AG04449 (cell line): ENCODE measurements at regions of chr11 and their contacts with region 1.

Region 1: DNA sequence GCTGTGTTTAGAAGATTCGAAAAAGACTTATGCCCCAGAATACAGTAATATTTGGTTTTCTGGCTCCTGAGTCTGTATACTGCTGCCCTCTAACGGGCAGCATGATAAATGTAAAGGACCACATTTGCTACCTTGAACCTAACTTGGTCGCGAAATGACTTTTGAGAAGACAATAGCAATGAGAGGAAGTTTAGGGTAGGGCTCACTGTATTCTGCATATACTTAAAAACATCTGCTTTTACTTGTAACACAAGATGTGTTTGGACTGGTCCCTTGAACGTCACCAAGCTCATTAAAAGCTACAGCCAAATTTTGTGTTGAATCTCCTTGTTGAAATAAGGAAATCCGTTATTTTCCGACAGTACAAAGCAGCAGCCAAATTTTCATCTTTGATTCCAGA is 309.1 kb downstream of the SWAP70 start:
- DNase-seq: no peak
- H3K4me3 ChIP-seq: no peak overlapping the region
- CTCF ChIP-seq: peak; percentile 51

Region 2: DNA sequence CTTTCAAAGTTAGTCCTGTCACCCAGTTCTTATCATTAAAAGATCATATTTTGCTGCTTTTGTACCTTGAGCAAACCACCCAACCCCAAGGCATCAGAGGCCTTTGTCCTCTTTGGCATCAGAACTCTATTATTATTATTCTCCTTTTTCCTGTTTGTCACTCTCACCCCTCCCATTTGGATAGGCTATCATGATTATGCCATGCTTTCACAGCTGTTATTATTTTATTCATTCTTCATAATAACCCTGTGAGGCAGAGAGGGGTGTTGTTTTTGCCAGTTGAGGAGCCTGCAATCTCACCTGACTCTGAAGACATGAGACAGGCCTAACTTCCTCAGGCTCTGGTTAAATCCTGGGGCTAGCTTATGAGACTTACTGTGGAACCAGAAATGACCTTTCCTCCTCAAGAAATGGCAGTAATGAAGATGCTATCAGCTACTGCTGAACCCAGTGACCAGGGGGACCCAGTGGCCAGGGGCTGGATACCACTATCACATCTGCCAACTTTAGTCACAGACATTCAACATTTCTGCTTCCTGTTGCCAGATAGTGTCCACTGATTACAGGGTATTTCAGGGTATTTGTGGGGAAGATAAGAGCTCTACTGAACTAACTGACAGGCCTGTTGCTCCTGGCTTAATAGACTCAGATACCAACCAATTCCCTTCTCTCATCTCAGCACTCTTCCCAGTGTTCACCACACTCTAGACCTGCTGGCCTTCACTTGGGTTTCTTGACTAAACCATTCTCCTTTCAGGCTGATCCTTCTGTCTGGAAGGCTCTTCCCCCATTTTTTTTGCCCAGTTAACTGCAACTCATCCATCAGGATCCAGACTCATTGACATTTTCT is 320.9 kb before region 1 on chr11:
- CTCF ChIA-PET with region 1: no interaction called
- POLR2A ChIA-PET with region 1: no interaction called
- DNase-seq: no peak
- H3K4me3 ChIP-seq: no peak overlapping the region
- CTCF ChIP-seq: no peak

Region 3: DNA sequence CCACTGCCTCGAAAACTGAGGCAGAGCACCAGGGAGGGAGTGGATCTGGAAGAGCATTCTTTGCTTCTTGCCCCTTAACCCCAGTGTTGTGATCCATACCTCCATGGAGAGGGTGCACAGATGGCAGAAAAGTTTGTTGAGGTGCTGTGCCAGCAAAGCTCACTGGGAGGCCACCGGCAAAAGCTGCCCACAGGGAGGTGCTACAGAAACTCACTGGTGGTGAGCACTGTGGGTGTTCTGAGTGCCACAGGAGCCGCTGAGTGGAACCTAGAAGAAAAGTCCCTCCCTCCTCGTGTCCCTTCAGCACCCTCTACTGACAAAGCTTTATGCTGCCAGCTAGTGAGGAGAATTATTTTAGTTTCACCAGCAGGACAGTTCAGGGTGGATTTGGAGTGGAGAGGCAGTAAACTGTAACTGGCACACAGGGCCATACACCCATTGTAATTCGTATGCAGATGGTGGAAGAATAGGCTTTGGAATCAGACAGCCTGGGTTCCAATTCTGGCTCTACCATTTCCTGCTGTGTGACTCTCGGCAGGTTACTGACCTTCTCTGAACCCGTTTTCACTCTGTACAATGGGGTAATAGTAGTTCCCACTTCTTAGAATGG is 224.5 kb before region 1 on chr11:
- CTCF ChIA-PET with region 1: interaction called, 32 read pairs
- POLR2A ChIA-PET with region 1: no interaction called
- DNase-seq: no peak
- H3K4me3 ChIP-seq: no peak overlapping the region
- CTCF ChIP-seq: peak; percentile 54

Region 4: DNA sequence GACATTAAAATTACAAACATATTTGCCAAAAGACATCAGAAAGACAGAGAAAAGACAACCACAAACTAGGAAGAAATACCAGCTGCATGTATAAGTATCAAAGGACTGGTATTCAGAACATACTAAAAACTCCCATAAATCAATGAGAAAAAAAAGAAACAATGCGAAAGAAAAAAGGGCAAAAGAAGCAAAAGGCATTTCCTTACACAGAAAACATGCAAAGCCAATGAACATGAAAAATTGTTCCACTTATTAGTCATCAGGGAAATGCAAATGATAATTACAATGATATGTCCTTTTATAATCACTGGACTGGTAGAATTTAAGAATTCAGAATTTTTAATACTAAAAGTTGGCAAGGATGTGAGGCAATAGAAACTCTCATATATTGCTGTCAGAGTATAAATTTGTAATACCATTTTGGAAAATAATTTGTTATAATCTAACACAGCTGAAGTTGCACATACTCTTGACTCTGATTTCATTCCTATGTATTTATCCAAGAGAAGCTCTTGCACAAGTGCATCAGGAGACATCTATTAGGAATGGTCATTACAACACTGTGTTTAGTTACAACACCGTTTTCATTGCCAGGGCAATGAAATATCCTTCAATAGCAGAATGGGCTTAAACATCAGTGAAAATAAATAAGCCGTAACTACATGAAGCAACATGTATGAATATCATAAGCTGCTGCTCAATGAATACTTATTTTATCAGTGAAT is 29.4 kb before region 1 on chr11:
- CTCF ChIA-PET with region 1: interaction called, 10 read pairs
- POLR2A ChIA-PET with region 1: no interaction called
- DNase-seq: peak; percentile 94
- H3K4me3 ChIP-seq: no peak overlapping the region
- CTCF ChIP-seq: no peak

Region 5: GRCh38 chr11:9962722-9963121 is 10.3 kb before region 1 on chr11:
- CTCF ChIA-PET with region 1: interaction called, 21 read pairs
- POLR2A ChIA-PET with region 1: no interaction called
- DNase-seq: no peak
- H3K4me3 ChIP-seq: no peak overlapping the region
- CTCF ChIP-seq: no peak

Region 6: DNA sequence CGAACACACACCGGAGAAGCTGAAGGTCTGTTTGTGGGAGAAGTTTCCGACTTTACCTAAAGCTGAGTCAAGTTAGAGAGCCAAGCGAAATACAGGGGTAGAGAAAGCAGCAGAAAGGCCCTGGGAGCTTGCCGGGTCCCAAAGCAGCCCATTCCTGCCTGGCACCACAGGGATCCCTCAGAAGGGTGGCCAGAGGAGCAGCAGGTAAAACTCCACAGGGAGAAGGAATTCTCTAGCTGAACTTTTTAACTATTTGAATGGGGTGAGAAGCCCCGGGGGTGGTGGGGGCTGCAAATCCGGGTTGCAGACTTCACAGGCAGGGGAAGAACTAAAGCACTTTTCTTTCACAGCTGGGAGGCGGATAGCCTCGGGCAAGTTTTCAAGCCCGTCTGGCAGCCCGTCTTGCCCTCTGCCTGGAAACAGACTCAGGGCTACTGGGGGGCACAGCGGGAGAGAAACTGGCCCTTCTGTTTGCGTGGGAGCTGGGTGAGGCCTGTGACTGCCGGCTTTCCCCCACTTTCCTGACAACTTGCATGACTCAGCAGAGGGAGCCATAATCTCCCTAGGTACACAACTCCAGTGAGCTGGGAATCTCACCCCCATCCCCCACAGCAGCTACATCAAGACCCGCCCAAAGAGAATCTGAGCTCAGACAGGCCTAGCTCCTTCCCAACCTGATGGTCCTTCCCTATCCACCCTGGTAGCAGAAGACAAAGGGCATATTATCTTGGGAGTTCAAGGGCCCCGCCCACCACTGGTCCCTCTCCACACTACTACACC is 10.0 kb after region 1 on chr11:
- CTCF ChIA-PET with region 1: interaction called, 40 read pairs
- POLR2A ChIA-PET with region 1: no interaction called
- DNase-seq: no peak
- H3K4me3 ChIP-seq: no peak overlapping the region
- CTCF ChIP-seq: no peak

Region 7: DNA sequence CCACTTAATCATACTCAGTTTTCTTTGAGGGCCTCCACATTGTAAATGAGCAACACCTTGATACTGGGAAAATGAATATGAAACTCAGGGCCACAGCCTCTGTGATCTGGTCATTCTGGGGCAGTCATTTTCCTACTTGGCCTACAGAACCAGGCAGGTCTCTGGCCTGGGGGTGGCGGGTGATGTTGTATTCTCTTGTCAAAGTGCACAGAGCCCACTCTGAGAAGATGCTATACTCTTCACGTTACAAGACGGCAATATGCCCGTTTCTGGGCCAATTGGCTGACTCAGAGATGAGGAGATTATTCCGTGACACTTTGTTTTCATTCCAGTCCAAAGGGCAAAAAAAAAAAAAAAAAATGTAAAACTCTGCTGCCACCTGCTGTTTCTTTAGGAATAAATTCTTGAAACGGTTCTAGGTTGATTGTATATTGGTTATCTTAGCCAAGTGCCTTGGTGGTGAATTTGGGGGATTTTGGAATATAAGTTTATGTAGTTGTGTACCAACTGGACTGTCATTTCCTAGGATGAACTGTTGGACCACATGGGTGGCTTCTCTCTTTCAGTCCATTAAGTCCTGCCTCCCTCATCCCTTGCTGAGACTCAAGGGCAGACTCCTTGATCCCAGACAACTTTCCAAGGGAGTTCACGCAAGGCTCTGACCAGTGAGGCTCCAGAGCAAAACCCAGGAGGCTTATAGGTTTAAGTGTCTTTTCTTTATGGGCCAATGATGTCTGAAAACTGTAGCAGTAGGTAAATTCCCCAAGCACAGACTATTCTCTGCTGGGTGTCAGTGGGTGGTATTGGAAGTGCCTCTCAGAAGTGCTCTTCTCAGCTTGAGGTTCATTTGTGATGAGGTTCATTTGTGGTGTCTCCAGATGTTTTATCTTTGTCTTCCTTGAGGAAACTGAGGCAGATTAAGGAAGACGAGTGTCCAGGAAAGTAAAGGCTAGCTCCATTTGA is 350.1 kb after region 1 on chr11:
- CTCF ChIA-PET with region 1: interaction called, 24 read pairs
- POLR2A ChIA-PET with region 1: no interaction called
- DNase-seq: peak; percentile 67
- H3K4me3 ChIP-seq: no peak overlapping the region
- CTCF ChIP-seq: no peak